Activated CD4-positive, alpha-beta T cell treated with anti-CD3 and anti-CD28 coated beads for 36 hours (primary cell): ENCODE measurements at regions of chr2 and their contacts with region 1.

Region 1: DNA sequence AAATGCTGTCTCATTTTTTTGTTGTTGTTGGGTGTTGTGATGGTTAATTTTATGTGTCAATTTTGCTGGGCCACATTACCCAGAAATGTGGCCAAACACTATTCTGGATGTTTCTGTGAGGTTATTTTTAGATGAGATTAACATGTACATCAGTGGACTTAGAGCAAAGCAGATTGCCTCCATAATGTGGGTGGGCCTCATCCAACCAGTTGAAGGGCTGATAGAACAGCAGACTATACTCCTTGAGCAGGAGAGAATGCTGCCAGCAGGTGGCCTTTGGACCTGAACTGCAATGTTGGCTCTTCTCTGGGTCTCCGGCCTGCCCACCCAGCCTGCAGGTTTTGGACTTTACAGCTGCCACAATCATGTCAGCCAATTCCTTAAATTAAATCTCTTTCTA is 169.0 kb downstream of the FTCDNL1 start:
- DNase-seq: no peak
- ATAC-seq: no peak
- H3K4me3 Mint-ChIP-seq: no peak overlapping the region
- H3K27ac Mint-ChIP-seq: no peak overlapping the region
- H3K4me1 Mint-ChIP-seq: peaks cover 12% of the 10 kb centered on the region
- H3K27me3 Mint-ChIP-seq: peaks cover 8% of the 10 kb centered on the region

Region 2: GRCh38 chr2:199646439-199646838 is 35.6 kb before region 1 on chr2:
- CTCF ChIA-PET with region 1: no interaction called
- POLR2A ChIA-PET with region 1: no interaction called
- intact Hi-C with region 1: loop called in 1 of 2 experiments (anchors 1 kb)
- DNase-seq: no peak
- ATAC-seq: no peak
- H3K4me3 Mint-ChIP-seq: no peak overlapping the region
- H3K27ac Mint-ChIP-seq: no peak overlapping the region
- H3K4me1 Mint-ChIP-seq: no peaks in the 10 kb centered on the region
- H3K27me3 Mint-ChIP-seq: peaks cover 4% of the 10 kb centered on the region